ENCODE measurements at regions of chr20 and their contacts with region 1.

Region 1: GRCh38 chr20:19995220-19995863 is 21.8 kb upstream of the NAA20 start:
- DNase-seq: peak in 7 of 14 experiments; percentile 6 to 73 (median 54)
- ATAC-seq: peak; percentile 61
- H3K4me3 ChIP-seq: no peak overlapping the region
- H3K4me3 Mint-ChIP-seq: no peak overlapping the region
- H3K27ac ChIP-seq: no peak overlapping the region
- H3K27ac Mint-ChIP-seq: no peak overlapping the region
- H3K4me1 ChIP-seq: no peaks in the 10 kb centered on the region
- H3K4me1 Mint-ChIP-seq: no peaks in the 10 kb centered on the region
- H3K27me3 ChIP-seq: no peaks in the 10 kb centered on the region
- H3K27me3 Mint-ChIP-seq: peaks cover 23% of the 10 kb centered on the region
- CTCF ChIP-seq: peak; percentile 81

Region 2: GRCh38 chr20:19692685-19693119 is 302.6 kb before region 1 on chr20:
- CTCF ChIA-PET with region 1: no interaction called
- POLR2A ChIA-PET with region 1: no interaction called
- intact Hi-C with region 1: loop called (anchors 2 kb)
- DNase-seq: peak in 12 of 14 experiments; percentile 3 to 59 (median 29)
- ATAC-seq: no peak
- H3K4me3 ChIP-seq: no peak overlapping the region
- H3K4me3 Mint-ChIP-seq: no peak overlapping the region
- H3K27ac ChIP-seq: no peak overlapping the region
- H3K27ac Mint-ChIP-seq: no peak overlapping the region
- H3K4me1 ChIP-seq: no peaks in the 10 kb centered on the region
- H3K4me1 Mint-ChIP-seq: no peaks in the 10 kb centered on the region
- H3K27me3 ChIP-seq: peaks cover 0 to 12% of the 10 kb centered on the region in 2 experiments
- H3K27me3 Mint-ChIP-seq: peaks cover 26% of the 10 kb centered on the region
- CTCF ChIP-seq: peak; percentile 81

Region 3: GRCh38 chr20:19774135-19774933 is 221.0 kb before region 1 on chr20:
- CTCF ChIA-PET with region 1: no interaction called
- POLR2A ChIA-PET with region 1: no interaction called
- intact Hi-C with region 1: no loop called
- DNase-seq: no peak
- ATAC-seq: no peak
- H3K4me3 ChIP-seq: no peak overlapping the region
- H3K4me3 Mint-ChIP-seq: no peak overlapping the region
- H3K27ac ChIP-seq: no peak overlapping the region
- H3K27ac Mint-ChIP-seq: no peak overlapping the region
- H3K4me1 ChIP-seq: no peaks in the 10 kb centered on the region
- H3K4me1 Mint-ChIP-seq: no peaks in the 10 kb centered on the region
- H3K27me3 ChIP-seq: peaks cover 0 to 2% of the 10 kb centered on the region in 2 experiments
- H3K27me3 Mint-ChIP-seq: peaks cover 12% of the 10 kb centered on the region
- CTCF ChIP-seq: no peak

Region 4: DNA sequence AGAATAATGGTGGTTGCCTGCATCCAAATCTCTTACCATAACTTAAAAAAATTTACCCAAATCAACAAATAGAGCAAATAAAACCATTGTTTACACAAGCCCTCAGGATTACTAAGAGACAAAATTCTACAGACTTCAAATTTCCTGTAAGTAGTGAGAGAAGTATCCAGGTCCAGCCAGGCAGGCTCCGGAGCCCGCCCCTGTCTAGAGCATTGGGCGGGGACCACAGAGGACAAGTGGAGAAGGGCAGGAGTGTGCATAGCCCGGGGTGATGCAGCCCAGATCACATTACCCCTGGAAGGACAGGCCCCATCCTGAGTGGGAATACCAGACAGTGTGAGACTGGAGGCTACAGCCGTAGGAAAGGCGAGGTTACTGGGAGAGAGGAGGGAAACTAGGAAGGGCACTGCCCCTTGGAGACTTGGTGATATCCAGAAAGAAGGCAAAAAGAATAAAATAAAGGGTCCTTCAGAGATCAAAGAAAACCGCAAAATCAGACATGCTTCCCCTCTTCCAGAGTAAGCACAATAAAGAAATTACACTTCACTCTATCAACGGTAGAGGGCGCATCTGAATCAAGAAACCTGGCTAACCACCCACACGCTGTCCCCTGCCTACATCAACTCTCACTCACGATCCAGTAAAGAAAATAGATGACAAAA is 210.7 kb before region 1 on chr20:
- CTCF ChIA-PET with region 1: no interaction called
- POLR2A ChIA-PET with region 1: no interaction called
- intact Hi-C with region 1: loop called in 1 of 2 experiments (anchors 2 kb)
- DNase-seq: peak in 3 of 14 experiments; percentile 42 to 57 (median 55)
- ATAC-seq: no peak
- H3K4me3 ChIP-seq: no peak overlapping the region
- H3K4me3 Mint-ChIP-seq: no peak overlapping the region
- H3K27ac ChIP-seq: no peak overlapping the region
- H3K27ac Mint-ChIP-seq: no peak overlapping the region
- H3K4me1 ChIP-seq: no peaks in the 10 kb centered on the region
- H3K4me1 Mint-ChIP-seq: no peaks in the 10 kb centered on the region
- H3K27me3 ChIP-seq: no peaks in the 10 kb centered on the region
- H3K27me3 Mint-ChIP-seq: peaks cover 12% of the 10 kb centered on the region
- CTCF ChIP-seq: peak; percentile 27

Region 5: GRCh38 chr20:19903168-19903811 is 92.1 kb before region 1 on chr20:
- CTCF ChIA-PET with region 1: no interaction called
- POLR2A ChIA-PET with region 1: no interaction called
- intact Hi-C with region 1: loop called (anchors 2 to 10 kb)
- DNase-seq: peak in 4 of 14 experiments; percentile 17 to 68 (median 48)
- ATAC-seq: no peak
- H3K4me3 ChIP-seq: no peak overlapping the region
- H3K4me3 Mint-ChIP-seq: no peak overlapping the region
- H3K27ac ChIP-seq: no peak overlapping the region
- H3K27ac Mint-ChIP-seq: no peak overlapping the region
- H3K4me1 ChIP-seq: no peaks in the 10 kb centered on the region
- H3K4me1 Mint-ChIP-seq: no peaks in the 10 kb centered on the region
- H3K27me3 ChIP-seq: no peaks in the 10 kb centered on the region
- H3K27me3 Mint-ChIP-seq: peaks cover 10% of the 10 kb centered on the region
- CTCF ChIP-seq: no peak